Spleen (tissue), 13 donors: ENCODE measurements at regions of chr12 and their contacts with region 1.

Region 1: DNA sequence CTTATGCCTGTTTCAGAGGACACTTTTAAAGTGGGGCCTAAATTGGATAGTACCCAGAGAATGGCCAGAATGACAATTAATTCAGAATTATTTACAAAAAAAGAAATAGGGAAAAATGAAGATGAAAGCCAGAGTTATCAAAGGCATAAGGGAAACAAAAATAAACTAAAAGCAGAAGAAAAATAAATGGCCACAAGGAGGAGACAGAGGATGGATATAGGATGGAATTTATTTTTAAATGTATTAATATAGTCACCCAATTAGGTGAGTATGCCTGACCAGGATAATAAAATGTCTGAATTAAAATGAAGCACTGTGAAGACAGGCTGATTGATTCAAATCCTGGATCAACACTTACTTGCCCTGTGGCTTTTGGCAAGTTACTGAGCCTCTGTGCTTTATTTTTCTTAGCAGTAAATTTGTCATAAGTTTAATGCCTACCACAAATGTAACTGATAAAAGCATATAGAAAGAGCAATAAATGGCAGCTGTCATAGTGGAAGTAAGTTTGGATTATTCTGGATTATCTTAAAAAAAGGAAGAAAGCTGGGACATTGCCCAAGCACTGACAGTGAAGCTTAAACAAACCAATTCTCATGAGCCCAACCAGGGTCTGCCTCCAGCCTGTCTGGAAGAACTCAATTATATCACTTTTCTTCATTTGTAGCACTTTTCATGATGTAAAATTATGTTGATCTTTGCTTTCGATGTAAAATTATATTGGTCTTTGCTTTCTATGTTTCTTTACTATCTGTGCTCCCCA is 3.5 kb downstream of the CLEC9A start:
- DNase-seq: no peak
- H3K4me3 ChIP-seq: no peak overlapping the region
- H3K27ac ChIP-seq: peak overlapping the region in 1 of 8 donors; percentile 7
- H3K4me1 ChIP-seq: peaks cover 0 to 9% (median 0%) of the 10 kb centered on the region in 6 donors
- H3K27me3 ChIP-seq: peaks cover 0 to 4% (median 0%) of the 10 kb centered on the region in 7 donors
- CTCF ChIP-seq: peak in 8 of 11 experiments; percentile 24 to 65 (median 54)
- POLR2A ChIP-seq: no peak

Region 2: GRCh38 chr12:9925708-9926393 is 108.1 kb before region 1 on chr12:
- intact Hi-C with region 1: no loop called
- DNase-seq: no peak
- H3K4me3 ChIP-seq: peak overlapping the region in 2 of 8 donors; percentile 3 to 49
- H3K27ac ChIP-seq: no peak overlapping the region
- H3K4me1 ChIP-seq: peaks cover 0 to 10% (median 0%) of the 10 kb centered on the region in 6 donors
- H3K27me3 ChIP-seq: no peaks in the 10 kb centered on the region
- CTCF ChIP-seq: peak in 9 of 11 experiments; percentile 11 to 62 (median 48)
- POLR2A ChIP-seq: no peak

Region 3: DNA sequence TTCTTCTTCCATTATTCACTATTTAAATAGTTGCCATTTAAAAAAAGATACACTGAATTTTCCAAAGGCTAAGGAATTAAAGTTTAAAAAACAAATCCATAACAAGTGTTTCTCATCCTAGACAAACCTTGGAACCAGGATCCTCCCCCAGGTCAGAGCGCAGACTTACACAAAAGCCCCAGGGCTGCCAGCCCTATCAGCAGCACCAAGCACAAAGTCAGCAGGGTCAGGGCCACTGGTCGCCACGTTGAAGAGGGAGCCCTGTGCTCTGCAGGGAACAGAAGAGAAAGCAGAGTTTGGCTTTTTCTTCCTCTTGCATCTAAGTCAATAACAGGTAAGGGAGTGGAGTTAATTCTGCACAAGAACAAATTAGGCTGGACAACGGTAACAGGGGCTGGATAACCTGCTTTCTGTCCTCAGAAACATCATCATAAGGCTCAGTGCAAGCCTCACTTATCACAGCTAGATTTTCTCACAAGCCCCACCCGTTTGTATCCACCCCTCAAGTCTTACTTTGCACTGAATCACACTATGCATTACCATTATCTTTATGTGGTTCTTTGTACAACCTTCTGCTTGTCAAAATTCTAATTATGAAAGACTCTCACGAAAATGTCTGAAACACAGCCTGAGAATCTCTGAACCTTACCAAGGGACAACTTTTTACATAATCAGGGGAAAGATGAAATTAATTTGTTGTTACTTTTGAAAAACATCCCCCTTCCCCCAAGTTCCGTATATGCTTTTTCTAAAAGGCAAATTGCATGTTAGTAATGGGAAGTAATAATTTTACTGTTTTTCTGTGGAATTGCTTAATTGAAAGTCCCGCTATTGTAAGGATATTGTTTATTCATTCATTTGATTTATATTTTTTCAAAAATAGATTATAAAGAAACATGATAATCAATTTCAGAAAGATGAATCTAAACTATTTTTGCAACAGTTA is 55.3 kb after region 1 on chr12:
- intact Hi-C with region 1: no loop called
- DNase-seq: peak; percentile 80
- H3K4me3 ChIP-seq: peak overlapping the region in 1 of 8 donors; percentile 42
- H3K27ac ChIP-seq: peak overlapping the region in 4 of 8 donors; percentile 2 to 36 (median 24)
- H3K4me1 ChIP-seq: peaks cover 0 to 35% (median 11%) of the 10 kb centered on the region in 6 donors
- H3K27me3 ChIP-seq: no peaks in the 10 kb centered on the region
- CTCF ChIP-seq: no peak
- POLR2A ChIP-seq: no peak

Region 4: DNA sequence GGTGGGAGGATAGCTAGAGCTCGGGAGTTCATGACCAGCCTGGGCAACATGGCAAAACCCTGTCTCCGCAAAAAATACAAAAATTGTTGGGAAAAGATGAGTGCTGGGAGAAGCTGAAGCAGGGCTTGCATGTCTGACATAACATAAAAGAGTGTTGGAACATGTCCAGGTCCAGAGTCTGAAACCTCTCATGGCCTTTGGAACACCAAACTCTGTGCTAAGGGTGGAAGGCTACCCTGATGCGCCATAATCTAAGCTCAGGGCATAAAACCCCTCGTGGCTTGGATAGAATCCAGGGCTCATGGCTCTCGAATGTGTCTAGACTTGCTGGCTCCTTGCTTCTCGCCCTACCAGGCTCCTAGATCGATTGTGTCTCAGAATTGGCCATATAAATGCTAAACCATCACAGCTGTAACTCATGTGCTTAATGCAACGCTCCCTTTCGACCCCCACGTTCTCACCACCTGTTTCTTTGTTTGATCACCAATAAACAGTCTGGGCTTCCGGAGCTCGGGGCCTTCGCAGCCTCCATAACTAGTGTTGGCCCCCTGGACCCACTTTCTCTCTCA is 102.8 kb after region 1 on chr12:
- intact Hi-C with region 1: loop called (anchors 5 kb)
- DNase-seq: no peak
- H3K4me3 ChIP-seq: no peak overlapping the region
- H3K27ac ChIP-seq: no peak overlapping the region
- H3K4me1 ChIP-seq: peaks cover 0 to 10% (median 2%) of the 10 kb centered on the region in 6 donors
- H3K27me3 ChIP-seq: peaks cover 0 to 26% (median 0%) of the 10 kb centered on the region in 7 donors
- CTCF ChIP-seq: no peak
- POLR2A ChIP-seq: no peak